Endothelial cell of umbilical vein (primary cell): ENCODE measurements at regions of chr3 and their contacts with region 1.

Region 1: DNA sequence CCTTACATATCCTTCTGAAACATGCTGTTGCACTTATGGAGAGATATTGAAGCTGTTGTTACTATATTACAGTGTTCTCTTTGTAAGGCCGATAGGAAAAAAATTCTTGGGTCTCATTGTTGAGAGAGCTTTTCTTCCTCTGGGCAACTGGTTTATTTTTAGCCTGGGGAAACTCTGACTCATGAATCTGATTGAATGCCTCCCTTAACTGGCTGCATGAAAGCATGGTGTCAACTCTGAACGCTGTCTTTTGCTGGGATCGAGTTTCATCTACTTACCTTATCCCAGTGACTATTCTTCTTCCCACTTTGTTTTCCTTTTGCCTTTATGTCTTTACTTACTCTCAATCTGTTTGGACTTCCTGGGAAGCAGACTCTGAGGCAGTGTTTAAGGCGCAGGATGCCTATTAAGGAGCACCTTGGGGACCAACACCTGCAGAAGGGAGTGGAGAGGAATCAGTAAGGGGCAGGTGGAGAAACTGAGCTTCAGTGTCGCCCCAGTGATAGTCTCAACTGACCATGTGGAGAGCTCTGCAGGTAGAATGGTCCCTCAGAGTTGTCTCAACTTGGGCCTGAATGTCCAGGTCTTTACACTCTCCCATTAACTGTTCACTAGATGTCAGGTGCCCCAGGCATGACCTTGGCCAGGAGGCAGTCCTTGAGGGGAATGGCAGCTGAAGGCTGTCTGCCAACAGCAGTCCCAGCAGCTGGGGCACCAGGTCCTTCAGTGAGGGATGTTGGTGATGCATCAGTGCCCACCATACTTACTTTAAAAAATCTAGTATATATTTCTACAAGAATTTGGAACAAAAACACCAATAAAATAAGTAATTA is 88.9 kb upstream of the CCNL1 start:
- DNase-seq: peak; percentile 94
- H3K4me3 ChIP-seq: no peak overlapping the region
- H3K27ac ChIP-seq: peak overlapping the region; percentile 39
- H3K4me1 ChIP-seq: peaks cover 23% of the 10 kb centered on the region
- H3K27me3 ChIP-seq: no peaks in the 10 kb centered on the region
- CTCF ChIP-seq: no peak
- POLR2A ChIP-seq: peak; percentile 37

Region 2: GRCh38 chr3:157335198-157336076 is 86.6 kb after region 1 on chr3:
- CTCF ChIA-PET with region 1: no interaction called
- POLR2A ChIA-PET with region 1: no interaction called
- dilution Hi-C with region 1: no loop called
- intact Hi-C with region 1: loop called (anchors 2 kb)
- DNase-seq: peak; percentile 98
- H3K4me3 ChIP-seq: no peak overlapping the region
- H3K27ac ChIP-seq: peak overlapping the region; percentile 84
- H3K4me1 ChIP-seq: peaks cover 43% of the 10 kb centered on the region
- H3K27me3 ChIP-seq: no peaks in the 10 kb centered on the region
- CTCF ChIP-seq: no peak
- POLR2A ChIP-seq: peak; percentile 67